CD4-positive, alpha-beta T cell (primary cell): ENCODE measurements at regions of chr2 and their contacts with region 1.

Region 1: DNA sequence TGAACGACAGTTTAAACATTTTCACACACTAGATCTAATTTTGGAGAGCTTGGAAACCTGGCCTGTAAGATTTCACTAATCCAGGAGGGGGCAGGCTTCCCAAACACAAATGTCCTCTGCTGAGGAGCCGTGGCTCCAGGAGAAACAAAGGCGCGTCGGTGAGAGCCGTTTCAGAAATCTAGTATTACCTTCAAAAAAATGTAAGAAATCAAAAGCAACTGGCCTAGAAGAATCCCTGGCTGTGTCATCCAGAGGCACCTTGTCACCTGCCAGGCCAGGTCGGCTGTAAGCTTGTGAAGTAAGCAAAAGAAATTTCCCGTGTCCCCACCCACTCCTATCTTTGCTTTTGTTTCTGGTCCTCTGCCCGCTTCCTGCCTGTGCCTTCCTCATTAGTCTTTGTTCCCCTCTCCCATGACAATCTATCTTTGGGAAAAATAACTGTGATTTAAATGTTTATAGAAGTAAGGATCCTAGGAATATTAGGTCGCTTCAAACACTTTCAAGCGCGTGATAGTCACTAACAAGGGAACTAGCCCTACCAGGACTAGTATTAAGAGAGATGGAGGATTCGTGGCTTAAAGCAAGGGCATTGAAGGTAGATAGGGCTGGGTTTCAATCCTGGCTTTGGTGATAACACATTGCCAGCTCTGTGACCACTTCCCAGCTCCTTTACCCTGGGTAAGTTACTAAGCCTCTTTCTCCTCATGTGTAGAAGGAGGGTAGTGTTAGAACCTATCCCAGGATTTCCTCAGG is 99.5 kb upstream of the STK39 start:
- DNase-seq: peak; percentile 49 to 83 (median 61)
- ATAC-seq: peak; percentile 90
- H3K4me3 ChIP-seq: peak overlapping the region; percentile 52
- H3K4me3 Mint-ChIP-seq: peak overlapping the region; percentile 79
- H3K27ac ChIP-seq: no peak overlapping the region
- H3K27ac Mint-ChIP-seq: peak overlapping the region; percentile 7
- H3K4me1 ChIP-seq: no peaks in the 10 kb centered on the region
- H3K4me1 Mint-ChIP-seq: peaks cover 8% of the 10 kb centered on the region
- H3K27me3 ChIP-seq: no peaks in the 10 kb centered on the region
- H3K27me3 Mint-ChIP-seq: peaks cover 9% of the 10 kb centered on the region
- CTCF ChIP-seq: peak; percentile 93

Region 2: DNA sequence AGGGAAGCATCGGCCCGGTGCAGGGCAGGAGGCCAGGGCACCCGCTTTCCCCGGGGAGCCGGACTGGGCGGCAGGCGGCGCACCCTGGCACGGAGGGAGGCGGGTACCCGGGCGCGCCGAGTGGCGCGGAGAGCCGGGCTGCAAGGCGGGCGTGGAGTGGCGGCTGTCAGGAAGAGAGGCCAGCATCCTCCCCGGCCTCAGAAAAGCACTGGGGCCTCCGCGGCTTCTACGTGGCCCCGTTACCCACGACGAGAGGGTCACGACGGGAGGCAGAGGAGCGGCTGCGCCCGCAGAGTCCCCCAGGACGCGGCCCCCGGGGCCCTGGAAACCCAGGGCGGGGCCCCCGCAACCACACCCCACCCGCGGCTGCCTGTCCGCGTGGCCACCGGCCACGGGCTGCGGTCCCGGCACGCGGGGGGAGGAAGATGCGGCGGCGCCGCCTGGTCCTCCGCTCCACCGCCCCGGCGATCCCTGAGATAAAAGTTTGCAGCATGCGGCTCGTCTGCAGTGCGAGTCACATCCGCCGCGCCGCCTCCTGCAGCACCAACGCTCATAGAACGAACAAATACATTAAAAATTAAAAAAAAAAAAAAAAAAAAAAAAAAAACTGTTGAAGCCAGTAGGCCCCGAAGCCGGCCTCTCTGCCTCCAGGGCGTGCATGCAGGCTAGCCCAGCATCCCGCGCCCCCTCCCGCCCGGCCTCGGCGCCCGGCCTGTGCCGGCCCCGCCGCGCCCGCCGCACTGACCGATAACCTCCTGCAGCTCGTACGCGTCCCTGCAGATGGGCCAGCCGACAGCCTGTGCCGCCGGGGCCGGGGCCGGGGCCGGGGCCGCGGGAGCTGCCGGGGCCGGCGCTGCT is 100.2 kb before region 1 on chr2:
- CTCF ChIA-PET with region 1: no interaction called
- POLR2A ChIA-PET with region 1: no interaction called
- intact Hi-C with region 1: loop called in 1 of 2 experiments (anchors 5 kb)
- DNase-seq: peak; percentile 60 to 93 (median 78)
- ATAC-seq: peak; percentile 71
- H3K4me3 ChIP-seq: peak overlapping the region; percentile 73
- H3K4me3 Mint-ChIP-seq: peak overlapping the region; percentile 94
- H3K27ac ChIP-seq: peak overlapping the region; percentile 11 to 78
- H3K27ac Mint-ChIP-seq: peak overlapping the region; percentile 88
- H3K4me1 ChIP-seq: peaks cover 35% of the 10 kb centered on the region
- H3K4me1 Mint-ChIP-seq: peaks cover 41% of the 10 kb centered on the region
- H3K27me3 ChIP-seq: no peaks in the 10 kb centered on the region
- H3K27me3 Mint-ChIP-seq: no peaks in the 10 kb centered on the region
- CTCF ChIP-seq: no peak

Region 3: GRCh38 chr2:168293766-168294165 is 53.1 kb before region 1 on chr2:
- CTCF ChIA-PET with region 1: no interaction called
- POLR2A ChIA-PET with region 1: no interaction called
- intact Hi-C with region 1: no loop called
- DNase-seq: peak in 2 of 14 experiments; percentile 1 to 14
- ATAC-seq: no peak
- H3K4me3 ChIP-seq: no peak overlapping the region
- H3K4me3 Mint-ChIP-seq: no peak overlapping the region
- H3K27ac ChIP-seq: no peak overlapping the region
- H3K27ac Mint-ChIP-seq: no peak overlapping the region
- H3K4me1 ChIP-seq: no peaks in the 10 kb centered on the region
- H3K4me1 Mint-ChIP-seq: no peaks in the 10 kb centered on the region
- H3K27me3 ChIP-seq: no peaks in the 10 kb centered on the region
- H3K27me3 Mint-ChIP-seq: no peaks in the 10 kb centered on the region
- CTCF ChIP-seq: no peak

Region 4: DNA sequence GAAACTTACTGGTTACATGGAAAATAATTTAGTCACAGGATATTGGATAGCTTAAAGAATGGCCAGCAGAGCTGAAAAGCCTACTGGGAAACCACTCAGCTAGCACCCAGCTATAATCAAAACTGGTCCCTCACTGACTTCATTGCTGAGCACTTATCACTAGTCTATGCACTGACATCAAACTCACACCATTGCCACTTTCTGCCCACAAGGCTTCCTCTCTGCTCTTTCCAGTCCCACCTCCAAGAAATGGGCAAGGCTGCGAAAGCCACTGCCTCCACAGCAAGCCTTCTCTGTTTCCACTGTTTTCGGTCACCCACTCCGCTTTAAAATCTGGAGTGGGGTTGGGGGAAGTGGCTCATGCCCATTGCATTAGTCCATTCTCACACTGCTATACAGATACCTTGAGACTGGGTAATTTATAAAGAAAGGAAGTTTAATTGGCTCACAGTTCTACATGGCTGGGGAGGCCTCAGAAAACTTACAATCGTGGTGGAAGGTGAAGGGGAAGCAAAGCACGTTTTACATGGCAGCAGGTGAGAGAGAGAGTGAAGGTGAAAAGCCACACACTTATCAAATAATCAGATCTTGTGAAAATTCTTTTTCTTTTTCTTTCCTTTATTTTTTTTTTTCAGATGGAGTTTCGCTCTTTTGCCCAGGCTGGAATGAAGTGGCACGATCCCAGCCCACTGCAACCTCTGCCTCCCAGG is 32.2 kb after region 1 on chr2:
- CTCF ChIA-PET with region 1: no interaction called
- POLR2A ChIA-PET with region 1: no interaction called
- intact Hi-C with region 1: no loop called
- DNase-seq: peak in 1 of 14 experiments; percentile 72
- ATAC-seq: no peak
- H3K4me3 ChIP-seq: no peak overlapping the region
- H3K4me3 Mint-ChIP-seq: no peak overlapping the region
- H3K27ac ChIP-seq: no peak overlapping the region
- H3K27ac Mint-ChIP-seq: no peak overlapping the region
- H3K4me1 ChIP-seq: no peaks in the 10 kb centered on the region
- H3K4me1 Mint-ChIP-seq: no peaks in the 10 kb centered on the region
- H3K27me3 ChIP-seq: no peaks in the 10 kb centered on the region
- H3K27me3 Mint-ChIP-seq: no peaks in the 10 kb centered on the region
- CTCF ChIP-seq: no peak

Region 5: DNA sequence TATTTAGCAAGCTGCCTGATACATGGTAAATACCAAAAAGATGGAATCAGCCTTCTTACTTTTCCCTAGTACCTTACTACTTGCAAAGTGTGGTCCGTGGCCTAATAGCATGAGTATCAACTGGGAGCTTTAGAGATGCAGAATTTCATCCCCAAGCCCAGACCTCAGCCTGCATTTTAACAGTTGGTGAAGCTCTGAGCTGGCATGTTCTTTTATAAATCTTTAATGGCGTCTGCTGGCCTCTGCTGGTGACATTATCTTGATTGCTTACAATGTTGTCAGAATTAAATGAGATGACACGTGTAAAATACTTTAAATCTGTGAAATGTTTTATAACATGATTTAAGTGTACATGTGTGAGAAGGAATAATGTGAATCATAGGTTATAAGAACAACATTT is 340.4 kb after region 1 on chr2:
- CTCF ChIA-PET with region 1: interaction called, 9 read pairs
- POLR2A ChIA-PET with region 1: interaction called, 6 read pairs
- intact Hi-C with region 1: loop called (anchors 1 to 2 kb)
- DNase-seq: peak in 6 of 14 experiments; percentile 7 to 37 (median 27)
- ATAC-seq: peak; percentile 51
- H3K4me3 ChIP-seq: no peak overlapping the region
- H3K4me3 Mint-ChIP-seq: no peak overlapping the region
- H3K27ac ChIP-seq: no peak overlapping the region
- H3K27ac Mint-ChIP-seq: no peak overlapping the region
- H3K4me1 ChIP-seq: no peaks in the 10 kb centered on the region
- H3K4me1 Mint-ChIP-seq: peaks cover 4% of the 10 kb centered on the region
- H3K27me3 ChIP-seq: no peaks in the 10 kb centered on the region
- H3K27me3 Mint-ChIP-seq: no peaks in the 10 kb centered on the region
- CTCF ChIP-seq: no peak

Region 6: GRCh38 chr2:168705534-168706470 is 358.9 kb after region 1 on chr2:
- CTCF ChIA-PET with region 1: no interaction called
- POLR2A ChIA-PET with region 1: interaction called, 3 read pairs
- intact Hi-C with region 1: loop called (anchors 1 to 5 kb)
- DNase-seq: peak in 3 of 14 experiments; percentile 17 to 29 (median 21)
- ATAC-seq: no peak
- H3K4me3 ChIP-seq: no peak overlapping the region
- H3K4me3 Mint-ChIP-seq: no peak overlapping the region
- H3K27ac ChIP-seq: no peak overlapping the region
- H3K27ac Mint-ChIP-seq: no peak overlapping the region
- H3K4me1 ChIP-seq: no peaks in the 10 kb centered on the region
- H3K4me1 Mint-ChIP-seq: peaks cover 4% of the 10 kb centered on the region
- H3K27me3 ChIP-seq: no peaks in the 10 kb centered on the region
- H3K27me3 Mint-ChIP-seq: no peaks in the 10 kb centered on the region
- CTCF ChIP-seq: no peak

Region 7: DNA sequence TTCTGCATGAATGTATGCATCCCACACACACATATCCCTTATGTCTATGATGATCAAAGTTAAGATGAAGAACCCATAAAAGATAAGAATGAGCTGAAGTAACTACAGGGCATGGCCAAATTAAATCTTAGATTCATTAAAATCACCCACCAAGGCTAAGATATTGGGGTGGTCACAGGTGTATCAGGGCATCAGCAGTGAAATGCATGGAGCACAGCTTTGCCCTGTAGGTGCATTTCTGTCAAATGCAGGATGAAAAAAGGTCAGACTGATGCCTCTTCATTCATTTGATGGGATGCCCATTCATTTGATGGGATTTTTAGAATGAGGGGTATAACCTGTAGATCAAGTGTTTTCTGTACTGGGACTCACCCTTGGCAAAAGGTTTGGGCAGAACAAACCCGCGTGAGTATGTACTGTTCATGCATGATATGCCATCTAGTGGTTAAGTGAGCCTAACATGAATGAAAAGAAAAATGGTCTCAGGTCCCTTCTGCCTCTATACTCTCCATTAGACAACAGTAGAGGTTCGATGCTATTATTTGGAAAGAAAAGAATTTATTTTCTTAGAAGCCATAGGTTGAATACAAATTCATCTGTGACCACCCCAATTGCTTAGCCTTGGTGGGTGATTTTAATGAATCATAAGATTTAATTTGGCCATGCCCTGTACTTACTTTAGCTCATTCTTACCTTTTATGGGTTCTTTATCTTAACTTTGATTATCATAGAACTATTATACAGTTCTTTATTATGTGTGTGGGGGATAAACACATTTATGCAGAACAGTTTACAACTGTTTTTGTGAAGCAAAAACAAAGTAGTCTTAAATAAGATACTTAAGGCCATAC is 412.3 kb after region 1 on chr2:
- CTCF ChIA-PET with region 1: interaction called, 4 read pairs
- POLR2A ChIA-PET with region 1: no interaction called
- intact Hi-C with region 1: loop called (anchors 1 kb)
- DNase-seq: peak in 7 of 14 experiments; percentile 8 to 70 (median 33)
- ATAC-seq: peak; percentile 72
- H3K4me3 ChIP-seq: no peak overlapping the region
- H3K4me3 Mint-ChIP-seq: no peak overlapping the region
- H3K27ac ChIP-seq: no peak overlapping the region
- H3K27ac Mint-ChIP-seq: no peak overlapping the region
- H3K4me1 ChIP-seq: peaks cover 37% of the 10 kb centered on the region
- H3K4me1 Mint-ChIP-seq: peaks cover 50% of the 10 kb centered on the region
- H3K27me3 ChIP-seq: no peaks in the 10 kb centered on the region
- H3K27me3 Mint-ChIP-seq: no peaks in the 10 kb centered on the region
- CTCF ChIP-seq: peak; percentile 77

Region 8: DNA sequence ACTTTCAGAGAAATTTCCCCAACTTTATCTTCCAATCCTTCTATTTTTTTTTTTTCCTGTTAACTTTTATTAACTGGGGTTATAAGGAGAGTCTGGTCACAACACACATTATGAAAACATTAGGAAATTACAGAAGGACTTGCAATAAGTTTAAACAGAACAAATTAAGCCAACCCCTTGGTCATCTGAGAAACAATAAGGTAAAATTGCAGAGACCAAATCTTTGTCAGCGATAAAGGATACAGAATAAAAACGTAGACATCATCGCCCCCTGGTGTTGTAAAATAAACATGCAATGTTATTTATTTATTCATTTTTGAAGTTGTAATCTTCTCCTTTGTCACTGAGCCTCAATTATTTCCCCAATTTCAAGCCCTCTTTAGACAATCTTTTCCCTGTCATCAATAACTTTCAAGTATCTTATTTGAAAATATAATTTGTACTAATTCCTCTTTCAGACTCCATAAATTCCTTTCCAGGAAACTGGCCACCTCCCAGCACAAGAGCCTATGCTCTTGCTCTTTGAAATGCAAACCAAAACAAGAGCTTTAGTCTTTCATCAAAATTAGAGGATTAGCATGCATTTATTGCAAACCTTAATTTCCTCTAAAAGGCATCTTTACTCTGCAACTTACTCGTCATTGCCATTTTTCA is 573.7 kb after region 1 on chr2:
- CTCF ChIA-PET with region 1: interaction called, 6 read pairs
- POLR2A ChIA-PET with region 1: no interaction called
- intact Hi-C with region 1: loop called (anchors 1 kb)
- DNase-seq: peak in 3 of 14 experiments; percentile 52 to 65 (median 62)
- ATAC-seq: no peak
- H3K4me3 ChIP-seq: no peak overlapping the region
- H3K4me3 Mint-ChIP-seq: no peak overlapping the region
- H3K27ac ChIP-seq: no peak overlapping the region
- H3K27ac Mint-ChIP-seq: no peak overlapping the region
- H3K4me1 ChIP-seq: peaks cover 2% of the 10 kb centered on the region
- H3K4me1 Mint-ChIP-seq: no peaks in the 10 kb centered on the region
- H3K27me3 ChIP-seq: peaks cover 0 to 6% of the 10 kb centered on the region in 2 experiments
- H3K27me3 Mint-ChIP-seq: peaks cover 29% of the 10 kb centered on the region
- CTCF ChIP-seq: peak; percentile 77

Region 9: DNA sequence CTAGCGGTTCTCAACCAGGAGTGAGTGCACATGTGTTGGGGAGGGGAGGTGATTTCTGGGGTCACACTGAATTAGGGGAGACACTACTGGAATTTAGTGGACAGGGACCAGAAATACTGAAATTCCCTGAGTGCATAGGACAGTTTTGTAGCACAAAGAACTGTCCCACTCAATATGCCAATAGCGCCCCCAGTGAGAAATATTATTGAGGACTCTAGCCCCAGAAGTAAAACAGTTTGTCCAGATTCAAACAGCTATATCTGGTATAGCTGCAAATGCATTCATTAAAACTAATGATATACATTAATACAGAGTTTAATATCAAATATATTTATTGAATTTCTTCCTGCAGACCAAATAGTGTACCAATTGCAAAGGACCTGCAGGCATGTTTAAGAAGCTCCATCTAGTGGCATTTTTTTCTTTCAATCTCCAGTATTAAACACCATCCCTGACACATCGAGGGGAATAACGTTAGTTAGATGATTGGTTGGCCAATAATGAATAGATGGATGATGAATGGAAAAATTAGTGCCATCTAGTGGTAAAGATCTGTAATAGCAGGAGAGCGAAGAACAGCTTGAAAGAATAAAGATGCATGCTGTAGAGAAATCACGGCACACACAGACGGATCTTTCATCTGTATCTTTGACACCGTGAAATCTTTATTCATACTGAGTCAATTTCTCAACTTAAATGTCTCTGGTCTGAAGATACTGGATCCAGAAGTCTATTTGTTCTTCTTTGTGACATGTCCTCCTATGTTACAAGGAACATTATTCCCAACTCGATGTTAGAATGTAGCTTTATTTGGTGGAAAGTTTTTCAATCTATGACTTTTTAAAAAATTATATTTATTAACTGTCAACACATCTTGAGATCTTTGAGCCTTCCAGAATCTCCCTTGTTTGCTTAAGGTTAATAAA is 784.9 kb after region 1 on chr2:
- CTCF ChIA-PET with region 1: no interaction called
- POLR2A ChIA-PET with region 1: no interaction called
- intact Hi-C with region 1: loop called in 1 of 2 experiments (anchors 10 kb)
- DNase-seq: peak in 3 of 14 experiments; percentile 56 to 82 (median 72)
- ATAC-seq: peak; percentile 79
- H3K4me3 ChIP-seq: no peak overlapping the region
- H3K4me3 Mint-ChIP-seq: no peak overlapping the region
- H3K27ac ChIP-seq: no peak overlapping the region
- H3K27ac Mint-ChIP-seq: no peak overlapping the region
- H3K4me1 ChIP-seq: no peaks in the 10 kb centered on the region
- H3K4me1 Mint-ChIP-seq: no peaks in the 10 kb centered on the region
- H3K27me3 ChIP-seq: no peaks in the 10 kb centered on the region
- H3K27me3 Mint-ChIP-seq: no peaks in the 10 kb centered on the region
- CTCF ChIP-seq: peak; percentile 94